Common myeloid progenitor, CD34-positive (primary cell): ENCODE measurements at regions of chr17 and their contacts with region 1.

Region 1: GRCh38 chr17:43694077-43694870 is 32.6 kb upstream of the MEOX1 start:
- DNase-seq: peak; percentile 82 to 89 (median 85)
- H3K4me3 ChIP-seq: no peak overlapping the region
- H3K27ac ChIP-seq: no peak overlapping the region
- H3K4me1 ChIP-seq: peaks cover 0 to 11% (median 0%) of the 10 kb centered on the region in 4 experiments
- H3K27me3 ChIP-seq: peaks cover 0 to 18% (median 14%) of the 10 kb centered on the region in 5 experiments

Region 2: DNA sequence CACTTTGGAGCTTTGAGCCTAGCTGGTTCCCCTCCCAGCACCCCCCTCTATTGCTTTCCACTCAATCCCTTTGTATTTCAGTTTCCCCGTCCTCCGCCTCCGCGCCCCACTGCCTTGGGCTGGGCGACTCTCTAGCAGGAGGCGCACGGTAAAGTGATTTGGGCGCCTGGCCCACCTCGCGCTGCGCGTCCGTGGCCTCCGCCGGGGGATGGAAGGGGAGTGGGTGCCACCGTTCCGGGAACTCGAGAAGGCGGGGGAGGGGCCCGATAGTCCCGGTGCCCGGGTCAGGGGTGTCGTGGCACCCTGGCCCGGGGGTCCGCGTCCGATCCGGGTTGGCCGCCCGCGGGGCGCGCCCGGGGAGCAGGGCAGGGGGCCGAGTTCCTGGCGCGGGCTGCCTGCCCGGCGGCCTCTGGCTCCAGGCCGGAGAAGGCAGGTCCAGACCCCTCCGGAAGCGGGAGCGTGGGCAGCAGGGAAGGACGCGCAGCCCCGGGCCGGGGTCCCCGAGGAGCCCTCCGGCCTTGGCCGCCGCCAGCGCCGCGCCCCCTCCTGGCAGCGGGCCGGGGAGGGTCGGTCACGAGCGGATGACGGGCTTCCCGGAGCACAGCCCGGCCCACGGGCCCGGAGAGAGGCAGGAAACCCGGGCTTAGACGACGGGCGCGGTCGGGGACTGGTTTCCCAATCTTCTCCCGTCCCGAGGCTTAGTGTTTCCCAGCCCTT is 48.4 kb before region 1 on chr17:
- CTCF ChIA-PET with region 1: no interaction called
- POLR2A ChIA-PET with region 1: no interaction called
- DNase-seq: peak; percentile 30 to 45 (median 40)
- H3K4me3 ChIP-seq: peak overlapping the region; percentile 25 to 69 (median 44)
- H3K27ac ChIP-seq: no peak overlapping the region
- H3K4me1 ChIP-seq: peaks cover 0 to 18% (median 9%) of the 10 kb centered on the region in 4 experiments
- H3K27me3 ChIP-seq: peaks cover 0 to 33% (median 17%) of the 10 kb centered on the region in 5 experiments

Region 3: GRCh38 chr17:43680461-43680860 is 13.8 kb before region 1 on chr17:
- CTCF ChIA-PET with region 1: interaction called, 12 read pairs
- POLR2A ChIA-PET with region 1: no interaction called
- DNase-seq: peak; percentile 43 to 82 (median 77)
- H3K4me3 ChIP-seq: peak overlapping the region in 3 of 7 experiments; percentile 21 to 46 (median 37)
- H3K27ac ChIP-seq: no peak overlapping the region
- H3K4me1 ChIP-seq: peaks cover 0 to 34% (median 28%) of the 10 kb centered on the region in 4 experiments
- H3K27me3 ChIP-seq: no peaks in the 10 kb centered on the region

Region 4: DNA sequence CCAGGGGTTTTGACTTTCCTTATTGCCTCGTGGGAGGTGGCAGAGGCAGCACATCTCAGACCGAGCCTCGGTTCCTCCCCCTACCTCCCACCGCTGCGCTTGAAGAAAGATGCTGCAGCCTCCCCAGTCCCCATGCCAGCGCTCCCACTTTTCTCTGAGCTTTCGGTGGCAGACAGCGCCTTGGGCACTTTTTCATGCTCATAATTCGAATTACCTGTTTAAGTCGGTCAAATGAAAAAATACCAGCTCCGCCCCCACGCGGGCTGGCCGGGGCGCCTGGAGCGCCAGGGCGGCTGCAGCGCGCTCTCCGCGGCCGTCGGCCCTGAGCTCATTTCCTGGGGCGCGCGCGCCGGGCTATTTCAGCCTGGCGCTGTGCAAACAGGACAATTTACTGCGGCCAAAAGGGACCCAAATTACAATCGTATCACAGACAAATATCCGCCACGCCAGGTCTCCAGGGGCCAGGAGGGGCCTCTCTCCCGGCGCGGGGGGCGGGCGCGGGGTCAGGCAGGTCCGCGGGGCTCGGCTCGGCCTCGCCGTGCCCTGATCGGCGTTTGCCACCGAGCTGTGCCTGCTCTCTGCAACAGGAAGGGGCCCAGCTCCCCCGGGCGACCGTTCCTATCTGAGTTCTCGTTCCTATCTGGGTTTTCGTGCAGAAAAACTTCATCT is 19.4 kb after region 1 on chr17:
- CTCF ChIA-PET with region 1: interaction called, 37 read pairs
- POLR2A ChIA-PET with region 1: no interaction called
- DNase-seq: peak in 2 of 3 donors; percentile 41 to 45
- H3K4me3 ChIP-seq: peak overlapping the region; percentile 9 to 75 (median 60)
- H3K27ac ChIP-seq: no peak overlapping the region
- H3K4me1 ChIP-seq: peaks cover 5 to 24% (median 19%) of the 10 kb centered on the region in 4 experiments
- H3K27me3 ChIP-seq: peaks cover 0 to 18% (median 2%) of the 10 kb centered on the region in 5 experiments

Region 5: DNA sequence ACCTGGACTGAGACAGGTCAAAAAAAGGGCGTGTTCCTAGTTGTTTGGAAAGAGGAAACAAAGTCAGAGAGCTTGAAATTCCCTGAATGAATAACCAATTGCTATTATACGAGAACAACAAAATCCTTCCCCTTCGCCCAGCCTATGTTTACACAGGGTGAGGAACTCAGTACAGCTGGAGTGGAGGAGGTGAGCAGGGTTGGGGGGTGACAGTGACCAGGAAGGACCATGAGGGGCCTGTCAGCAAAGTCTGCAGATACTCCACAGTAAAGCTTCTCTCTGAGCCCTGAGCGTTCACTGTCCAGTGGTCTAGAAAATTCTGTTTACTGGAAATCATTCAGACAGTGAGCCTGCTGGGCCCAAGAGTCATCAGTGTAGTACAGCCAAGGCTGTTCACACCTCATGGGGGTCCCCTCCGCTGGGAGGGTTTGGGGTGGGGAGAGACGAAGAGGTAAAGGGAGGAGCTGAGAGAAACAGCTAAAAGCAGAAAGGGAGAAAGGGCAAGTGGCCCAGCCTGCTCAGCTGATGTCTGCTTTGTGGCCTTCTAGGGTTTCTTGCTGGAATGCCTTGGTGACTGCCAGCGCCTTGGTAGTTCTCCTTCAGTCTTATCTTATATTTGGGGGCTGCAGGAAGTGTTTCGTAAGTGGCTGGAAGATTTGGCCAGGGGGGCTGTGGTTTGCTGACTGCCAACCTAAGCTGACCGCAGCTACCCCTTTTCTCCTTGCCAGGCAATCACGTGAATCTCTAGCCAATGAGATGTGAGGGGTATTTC is 78.8 kb after region 1 on chr17:
- CTCF ChIA-PET with region 1: interaction called, 555 read pairs
- POLR2A ChIA-PET with region 1: no interaction called
- DNase-seq: peak; percentile 96 to 99 (median 99)
- H3K4me3 ChIP-seq: peak overlapping the region in 4 of 7 experiments; percentile 21 to 39 (median 28)
- H3K27ac ChIP-seq: peak overlapping the region; percentile 41 to 55
- H3K4me1 ChIP-seq: peaks cover 18 to 91% (median 83%) of the 10 kb centered on the region in 4 experiments
- H3K27me3 ChIP-seq: no peaks in the 10 kb centered on the region

Region 6: GRCh38 chr17:43846221-43846712 is 152.0 kb after region 1 on chr17:
- CTCF ChIA-PET with region 1: interaction called, 10 read pairs
- POLR2A ChIA-PET with region 1: no interaction called
- DNase-seq: peak; percentile 68 to 74 (median 71)
- H3K4me3 ChIP-seq: no peak overlapping the region
- H3K27ac ChIP-seq: no peak overlapping the region
- H3K4me1 ChIP-seq: peaks cover 0 to 15% (median 8%) of the 10 kb centered on the region in 4 experiments
- H3K27me3 ChIP-seq: no peaks in the 10 kb centered on the region